PC-9 (cell line): ENCODE measurements at regions of chr5 and their contacts with region 1.

Region 1: DNA sequence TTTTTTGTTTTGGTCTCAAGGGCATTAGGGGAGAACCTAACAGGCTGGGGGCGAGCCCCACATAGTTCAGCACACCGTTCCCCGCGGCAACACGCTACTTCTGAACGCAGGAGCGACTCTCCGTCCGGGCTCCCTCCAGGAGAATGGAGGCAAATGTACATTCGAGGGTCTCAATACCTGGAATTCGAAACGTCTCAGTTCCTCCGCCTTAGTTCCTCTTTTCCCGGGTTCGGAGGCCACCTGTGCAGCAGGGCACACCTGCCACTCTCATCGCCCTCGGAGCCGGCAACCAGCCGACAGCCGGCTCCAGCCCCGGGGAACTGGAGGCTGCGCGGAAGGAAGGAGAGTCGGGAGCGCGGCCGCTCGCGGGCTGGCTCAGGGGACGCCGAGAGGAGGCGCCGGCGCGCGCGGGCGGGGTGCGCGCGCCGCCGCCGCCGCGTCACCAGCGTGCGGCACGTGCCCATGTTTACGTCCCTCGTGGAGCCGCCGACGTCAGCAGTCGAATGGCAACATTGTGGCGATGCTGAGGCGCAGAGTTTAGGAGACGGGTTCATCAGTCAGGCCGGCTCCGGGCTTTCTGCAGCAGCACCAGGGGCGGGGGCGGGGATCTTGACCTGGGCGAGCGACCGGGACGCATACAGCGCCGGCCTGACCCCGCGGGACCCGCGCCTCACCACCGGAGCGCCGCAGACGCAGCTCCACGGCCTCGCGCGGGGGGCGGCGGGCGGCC is at the start of gene JMY:
- DNase-seq: peak; percentile 58 to 82
- H3K4me3 ChIP-seq: peak within 1 kb of the TSS; percentile 72
- H3K27ac ChIP-seq: peak within 1 kb of the TSS; percentile 92
- H3K4me1 ChIP-seq: peaks cover 17% of the 10 kb centered on the region
- H3K27me3 ChIP-seq: no peaks in the 10 kb centered on the region
- CTCF ChIP-seq: no peak
- total RNA-seq, gene JMY: 9.9 and 11.7 TPM in 2 replicates

Region 2: GRCh38 chr5:79062436-79062835 is 173.4 kb before region 1 on chr5:
- CTCF ChIA-PET with region 1: interaction called, 13 read pairs
- POLR2A ChIA-PET with region 1: no interaction called
- intact Hi-C with region 1: no loop called
- DNase-seq: no peak
- H3K4me3 ChIP-seq: no peak overlapping the region
- H3K27ac ChIP-seq: no peak overlapping the region
- H3K4me1 ChIP-seq: no peaks in the 10 kb centered on the region
- H3K27me3 ChIP-seq: no peaks in the 10 kb centered on the region
- CTCF ChIP-seq: no peak

Region 3: DNA sequence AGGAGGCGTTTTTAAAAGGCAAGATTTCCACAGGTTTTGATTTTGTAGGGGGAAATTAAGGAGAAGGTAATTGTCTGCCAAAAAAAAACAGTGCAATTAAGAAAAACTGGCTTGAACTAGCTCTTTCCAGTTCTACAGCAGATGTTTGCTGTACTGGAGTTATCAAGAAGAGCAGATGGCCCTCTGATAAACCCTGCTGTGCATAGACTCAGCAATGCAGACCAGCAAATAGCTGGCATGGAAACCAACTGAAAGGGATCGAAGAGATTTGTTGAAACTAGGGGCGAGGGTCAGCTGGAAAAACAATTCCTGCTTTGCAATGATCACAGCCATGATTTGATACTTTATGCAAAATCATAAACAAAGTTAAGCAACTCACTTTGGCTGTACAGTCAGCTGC is 142.0 kb before region 1 on chr5:
- CTCF ChIA-PET with region 1: no interaction called
- POLR2A ChIA-PET with region 1: no interaction called
- intact Hi-C with region 1: no loop called
- DNase-seq: no peak
- H3K4me3 ChIP-seq: no peak overlapping the region
- H3K27ac ChIP-seq: no peak overlapping the region
- H3K4me1 ChIP-seq: no peaks in the 10 kb centered on the region
- H3K27me3 ChIP-seq: no peaks in the 10 kb centered on the region
- CTCF ChIP-seq: no peak

Region 4: GRCh38 chr5:79181419-79182022 is 54.3 kb before region 1 on chr5:
- CTCF ChIA-PET with region 1: no interaction called
- POLR2A ChIA-PET with region 1: no interaction called
- intact Hi-C with region 1: loop called (anchors 5 kb)
- DNase-seq: peak; percentile 6 to 68
- H3K4me3 ChIP-seq: no peak overlapping the region
- H3K27ac ChIP-seq: peak overlapping the region; percentile 55; the same call in 1 of the 2 replicates
- H3K4me1 ChIP-seq: peaks cover 42% of the 10 kb centered on the region
- H3K27me3 ChIP-seq: no peaks in the 10 kb centered on the region
- CTCF ChIP-seq: no peak

Region 5: DNA sequence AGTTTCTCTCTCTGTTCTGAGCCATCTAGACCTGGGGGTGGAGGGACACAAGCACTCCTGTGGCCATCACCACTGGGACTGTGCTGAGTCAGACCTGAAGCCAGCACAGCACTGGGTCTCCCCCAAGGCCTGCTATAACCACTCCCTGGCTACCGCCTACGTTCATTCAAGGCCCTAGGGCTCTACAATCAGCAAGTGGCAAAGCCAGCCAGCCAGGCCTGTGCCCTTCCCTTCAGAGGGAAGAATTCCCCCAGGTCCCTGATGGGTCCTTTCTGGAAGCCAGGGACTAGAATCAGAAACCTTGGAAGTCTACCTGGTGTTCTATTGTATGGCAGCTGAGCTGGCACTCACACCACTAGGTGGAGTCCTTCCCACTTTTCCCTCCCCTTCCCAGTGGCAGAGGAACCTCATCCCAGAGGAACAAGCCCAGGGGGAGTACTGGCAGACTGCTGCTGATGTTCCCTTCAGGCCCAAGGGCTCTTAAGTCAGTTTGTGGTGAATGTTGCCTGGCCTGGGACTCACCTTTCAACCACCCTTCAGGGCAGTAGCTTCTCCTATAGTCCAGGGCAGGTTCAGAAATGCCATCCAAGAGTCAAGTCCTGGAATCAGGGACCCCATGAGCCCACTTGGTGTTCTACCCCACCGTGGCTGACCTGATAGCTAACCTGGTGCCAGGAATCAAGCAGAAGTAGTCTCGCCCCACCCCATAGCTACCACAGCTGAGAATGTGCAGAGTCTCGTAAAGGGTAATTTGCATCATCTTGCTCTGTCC is 20.2 kb after region 1 on chr5:
- CTCF ChIA-PET with region 1: no interaction called
- POLR2A ChIA-PET with region 1: no interaction called
- intact Hi-C with region 1: no loop called
- DNase-seq: peak in 1 of 2 experiments; percentile 7
- H3K4me3 ChIP-seq: no peak overlapping the region
- H3K27ac ChIP-seq: no peak overlapping the region
- H3K4me1 ChIP-seq: 0 out of 2 replicates have a peak, but pooled peaks cover 7% of the 10 kb centered on the region
- H3K27me3 ChIP-seq: no peaks in the 10 kb centered on the region
- CTCF ChIP-seq: peak; percentile 62

Region 6: GRCh38 chr5:79546782-79547428 is 311.1 kb after region 1 on chr5:
- CTCF ChIA-PET with region 1: no interaction called
- POLR2A ChIA-PET with region 1: no interaction called
- intact Hi-C with region 1: no loop called
- DNase-seq: no peak
- H3K4me3 ChIP-seq: peak overlapping the region; percentile 44; the same call in 1 of the 2 replicates
- H3K27ac ChIP-seq: peak overlapping the region; percentile 76
- H3K4me1 ChIP-seq: peaks cover 48% of the 10 kb centered on the region
- H3K27me3 ChIP-seq: no peaks in the 10 kb centered on the region
- CTCF ChIP-seq: no peak